Activated T-helper 2 cell treated with anti-CD3 and anti-CD28 coated beads, Interferon-gamma antibody, Interleukin-2, Interleukin-4, amounts not matched to agents 10 μg/mL and 5 μg/mL and 100 μg/mL, durations not matched to agents 14 hours and 24 hours and 36 hours (primary cell): ENCODE measurements at regions of chr22 and their contacts with region 1.

Region 1: GRCh38 chr22:35154937-35155387 is 89.0 kb downstream of the ISX start:
- DNase-seq: no peak
- H3K4me3 Mint-ChIP-seq: no peak overlapping the region
- H3K27ac Mint-ChIP-seq: no peak overlapping the region
- H3K4me1 Mint-ChIP-seq: peaks cover 3% of the 10 kb centered on the region
- H3K27me3 Mint-ChIP-seq: peaks cover 1% of the 10 kb centered on the region

Region 2: DNA sequence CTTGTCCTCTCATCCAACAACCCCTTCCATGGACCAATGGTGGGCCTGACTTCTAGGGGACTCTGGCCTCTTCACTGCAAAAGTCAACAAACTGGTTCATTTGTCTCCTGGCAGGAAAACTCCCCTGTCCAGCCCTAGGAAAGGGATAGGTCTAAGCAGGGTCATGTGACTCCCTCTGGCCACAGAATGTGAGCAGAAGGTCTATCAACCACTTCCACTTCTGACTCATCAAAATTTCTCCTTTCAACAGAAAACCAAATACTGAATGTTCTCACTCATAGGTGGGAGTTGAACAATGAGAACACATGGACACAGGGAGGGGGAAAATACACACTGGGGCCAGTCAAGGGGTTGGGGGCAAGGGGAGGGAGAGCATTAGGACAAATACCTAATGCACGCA is 90.3 kb before region 1 on chr22:
- intact Hi-C with region 1: no loop called
- DNase-seq: no peak
- H3K4me3 Mint-ChIP-seq: no peak overlapping the region
- H3K27ac Mint-ChIP-seq: peak overlapping the region; percentile 47
- H3K4me1 Mint-ChIP-seq: peaks cover 6% of the 10 kb centered on the region
- H3K27me3 Mint-ChIP-seq: no peaks in the 10 kb centered on the region

Region 3: GRCh38 chr22:35231585-35232084 is 76.7 kb after region 1 on chr22:
- intact Hi-C with region 1: loop called (anchors 2 kb)
- DNase-seq: peak; percentile 64
- H3K4me3 Mint-ChIP-seq: no peak overlapping the region
- H3K27ac Mint-ChIP-seq: no peak overlapping the region
- H3K4me1 Mint-ChIP-seq: peaks cover 7% of the 10 kb centered on the region
- H3K27me3 Mint-ChIP-seq: peaks cover 22% of the 10 kb centered on the region